Activated CD4-positive, alpha-beta memory T cell treated with anti-CD3 and anti-CD28 coated beads, Interleukin-2, amount 10 ng/mL, durations not matched to agents 7 days and 5 days (primary cell): ENCODE measurements at regions of chr11 and their contacts with region 1.

Region 1: GRCh38 chr11:133927690-133928627 is 28.8 kb downstream of the IGSF9B start:
- DNase-seq: peak; percentile 76
- H3K4me3 Mint-ChIP-seq: peak overlapping the region; percentile 74
- H3K27ac Mint-ChIP-seq: peak overlapping the region; percentile 88
- H3K4me1 Mint-ChIP-seq: peaks cover 37% of the 10 kb centered on the region
- H3K27me3 Mint-ChIP-seq: no peaks in the 10 kb centered on the region

Region 2: GRCh38 chr11:133892584-133893380 is 35.2 kb before region 1 on chr11:
- CTCF ChIA-PET with region 1: no interaction called
- POLR2A ChIA-PET with region 1: no interaction called
- DNase-seq: no peak
- H3K4me3 Mint-ChIP-seq: no peak overlapping the region
- H3K27ac Mint-ChIP-seq: no peak overlapping the region
- H3K4me1 Mint-ChIP-seq: no peaks in the 10 kb centered on the region
- H3K27me3 Mint-ChIP-seq: peaks cover 21% of the 10 kb centered on the region

Region 3: DNA sequence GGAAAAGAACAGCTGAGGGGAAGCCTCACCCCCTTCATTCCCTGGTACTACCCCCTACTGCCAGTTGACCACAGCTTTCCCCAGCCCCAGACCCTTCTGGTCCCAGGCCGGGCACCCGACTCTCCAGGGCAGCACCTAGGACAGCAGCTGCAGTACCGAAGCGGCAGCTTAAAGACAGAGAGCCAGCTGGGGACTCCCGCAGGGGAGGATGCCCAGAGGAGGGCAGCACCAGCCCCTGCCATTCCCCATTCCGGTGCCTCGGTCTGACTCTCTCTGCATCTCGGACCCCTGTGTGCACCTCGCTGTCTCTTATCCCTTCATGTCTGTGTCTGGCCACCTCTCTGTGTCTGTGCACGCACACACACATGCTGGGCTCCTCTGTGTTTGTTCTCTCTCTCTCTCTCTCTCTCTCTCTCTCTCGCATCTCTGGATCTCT is 19.4 kb after region 1 on chr11:
- CTCF ChIA-PET with region 1: interaction called, 77 read pairs
- POLR2A ChIA-PET with region 1: interaction called, 57 read pairs
- DNase-seq: peak; percentile 78
- H3K4me3 Mint-ChIP-seq: peak overlapping the region; percentile 63
- H3K27ac Mint-ChIP-seq: peak overlapping the region; percentile 99
- H3K4me1 Mint-ChIP-seq: peaks cover 86% of the 10 kb centered on the region
- H3K27me3 Mint-ChIP-seq: no peaks in the 10 kb centered on the region

Region 4: DNA sequence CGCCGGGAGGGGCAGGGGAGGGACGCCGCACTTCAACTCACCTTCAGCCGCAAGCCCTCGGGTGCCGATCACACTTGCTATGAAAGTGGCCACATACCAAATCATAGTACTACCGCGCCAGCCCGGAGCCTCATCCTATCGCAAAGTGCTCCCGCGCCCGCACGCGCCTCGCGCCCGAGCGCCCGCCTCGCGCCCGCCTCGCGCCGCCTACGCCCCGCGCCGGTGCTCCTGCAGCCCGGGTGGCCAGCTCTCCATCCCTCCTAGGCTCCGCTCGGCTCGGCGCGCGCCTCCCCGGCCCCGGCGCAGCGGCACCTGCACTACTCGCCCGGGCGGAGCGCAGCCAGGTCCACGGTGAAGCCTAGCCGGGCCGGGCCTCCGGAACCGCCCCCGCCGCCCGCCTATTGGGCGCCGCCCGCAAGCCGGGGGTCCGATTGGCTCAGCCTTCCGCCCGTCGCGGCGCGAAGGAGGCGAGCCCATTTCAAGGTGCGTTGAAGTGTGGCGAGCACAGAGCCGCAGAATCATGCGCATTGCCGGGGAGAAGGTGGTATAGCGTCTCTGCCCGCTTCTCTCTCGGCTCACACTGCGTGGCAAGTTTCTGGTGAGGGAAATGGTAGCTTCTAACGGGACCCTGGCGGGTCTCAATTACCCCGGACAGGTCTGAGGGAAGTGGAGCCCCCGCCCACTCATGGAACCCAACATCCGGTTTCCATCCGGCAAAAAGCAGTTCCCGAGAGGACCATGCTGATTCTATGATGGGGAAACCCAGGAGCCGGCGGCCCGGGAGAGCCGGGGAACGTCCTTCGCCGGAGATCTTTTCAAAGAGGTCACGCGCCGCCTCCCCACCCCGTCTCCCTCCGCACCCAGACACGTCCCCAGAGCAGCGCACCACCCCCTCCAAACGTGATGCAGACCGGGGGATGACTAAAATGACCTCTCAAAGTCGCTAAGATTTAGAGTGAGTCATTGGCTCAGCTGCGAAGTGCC is 29.0 kb after region 1 on chr11 and contains the start of gene IGSF9B:
- CTCF ChIA-PET with region 1: interaction called, 19 read pairs
- POLR2A ChIA-PET with region 1: interaction called, 26 read pairs
- DNase-seq: peak; percentile 94
- H3K4me3 Mint-ChIP-seq: peak within 1 kb of the TSS; percentile 84
- H3K27ac Mint-ChIP-seq: peak within 1 kb of the TSS; percentile 42
- H3K4me1 Mint-ChIP-seq: peaks cover 54% of the 10 kb centered on the region
- H3K27me3 Mint-ChIP-seq: peaks cover 47% of the 10 kb centered on the region
- total RNA-seq, gene IGSF9B: 66.2 to 70.8 TPM

Region 5: GRCh38 chr11:134033696-134034491 is 105.9 kb after region 1 on chr11:
- CTCF ChIA-PET with region 1: interaction called, 15 read pairs
- POLR2A ChIA-PET with region 1: interaction called, 5 read pairs
- DNase-seq: peak; percentile 74
- H3K4me3 Mint-ChIP-seq: no peak overlapping the region
- H3K27ac Mint-ChIP-seq: peak overlapping the region; percentile 63
- H3K4me1 Mint-ChIP-seq: peaks cover 56% of the 10 kb centered on the region
- H3K27me3 Mint-ChIP-seq: peaks cover 13% of the 10 kb centered on the region

Region 6: DNA sequence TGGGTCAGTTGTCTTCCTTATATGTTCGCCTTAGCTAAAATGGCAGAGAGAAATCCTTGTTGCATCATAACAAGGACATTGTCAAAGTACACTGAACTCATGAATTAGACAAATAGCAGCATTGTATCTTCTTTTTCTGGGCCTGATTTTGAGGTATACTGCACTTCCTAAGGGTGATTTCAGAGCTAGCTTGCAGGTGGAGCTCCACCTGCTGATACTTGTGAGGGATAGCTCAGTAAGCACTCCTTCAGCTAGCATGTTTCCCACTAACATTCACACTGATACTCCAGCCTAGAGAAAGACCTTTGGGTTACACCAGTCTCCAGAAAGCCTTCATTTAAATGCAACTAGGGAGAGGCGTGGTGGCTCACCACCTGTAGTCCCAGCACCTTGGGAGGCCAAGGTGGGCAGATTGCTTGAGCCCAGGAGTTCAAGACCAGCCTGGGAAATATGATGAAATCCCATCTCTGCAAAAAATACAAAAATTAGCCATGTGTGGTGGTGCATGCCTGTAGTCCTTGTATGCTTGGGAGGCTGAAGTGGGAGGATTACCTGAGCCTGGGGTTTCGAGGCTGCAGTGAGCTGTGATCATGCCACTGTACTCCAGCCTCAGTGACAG is 170.7 kb after region 1 on chr11:
- CTCF ChIA-PET with region 1: interaction called, 24 read pairs
- POLR2A ChIA-PET with region 1: no interaction called
- DNase-seq: no peak
- H3K4me3 Mint-ChIP-seq: no peak overlapping the region
- H3K27ac Mint-ChIP-seq: no peak overlapping the region
- H3K4me1 Mint-ChIP-seq: no peaks in the 10 kb centered on the region
- H3K27me3 Mint-ChIP-seq: peaks cover 4% of the 10 kb centered on the region

Region 7: DNA sequence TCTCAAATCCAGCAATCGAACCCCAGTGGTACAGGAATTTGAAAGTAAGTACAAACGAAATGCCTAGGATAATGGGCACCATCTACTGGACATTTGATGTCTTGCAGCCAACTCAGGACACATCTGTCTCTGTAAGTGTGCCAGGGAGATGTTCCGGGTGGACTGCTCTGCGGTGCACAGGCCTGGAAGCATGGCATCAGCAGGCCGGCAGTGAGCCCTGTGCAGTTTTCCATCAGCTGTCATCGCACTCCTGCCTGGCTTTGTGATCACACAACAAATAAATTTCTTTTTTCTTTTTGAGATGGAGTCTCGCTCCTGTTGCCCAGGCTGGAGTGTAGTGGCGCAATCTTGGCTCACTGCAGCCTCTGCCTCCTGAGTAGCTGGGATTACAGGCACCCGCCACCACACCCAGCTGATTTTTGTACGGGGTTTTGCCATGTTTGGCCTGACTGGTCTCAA is 211.9 kb after region 1 on chr11:
- CTCF ChIA-PET with region 1: interaction called, 13 read pairs
- POLR2A ChIA-PET with region 1: interaction called, 3 read pairs
- DNase-seq: peak; percentile 57
- H3K4me3 Mint-ChIP-seq: no peak overlapping the region
- H3K27ac Mint-ChIP-seq: no peak overlapping the region
- H3K4me1 Mint-ChIP-seq: peaks cover 17% of the 10 kb centered on the region
- H3K27me3 Mint-ChIP-seq: no peaks in the 10 kb centered on the region